Activated CD8-positive, alpha-beta memory T cell treated with anti-CD3 and anti-CD28 coated beads, Interleukin-2, amount 10 ng/mL, durations not matched to agents 7 days and 5 days (primary cell): ENCODE measurements at regions of chr9 and their contacts with region 1.

Region 1: DNA sequence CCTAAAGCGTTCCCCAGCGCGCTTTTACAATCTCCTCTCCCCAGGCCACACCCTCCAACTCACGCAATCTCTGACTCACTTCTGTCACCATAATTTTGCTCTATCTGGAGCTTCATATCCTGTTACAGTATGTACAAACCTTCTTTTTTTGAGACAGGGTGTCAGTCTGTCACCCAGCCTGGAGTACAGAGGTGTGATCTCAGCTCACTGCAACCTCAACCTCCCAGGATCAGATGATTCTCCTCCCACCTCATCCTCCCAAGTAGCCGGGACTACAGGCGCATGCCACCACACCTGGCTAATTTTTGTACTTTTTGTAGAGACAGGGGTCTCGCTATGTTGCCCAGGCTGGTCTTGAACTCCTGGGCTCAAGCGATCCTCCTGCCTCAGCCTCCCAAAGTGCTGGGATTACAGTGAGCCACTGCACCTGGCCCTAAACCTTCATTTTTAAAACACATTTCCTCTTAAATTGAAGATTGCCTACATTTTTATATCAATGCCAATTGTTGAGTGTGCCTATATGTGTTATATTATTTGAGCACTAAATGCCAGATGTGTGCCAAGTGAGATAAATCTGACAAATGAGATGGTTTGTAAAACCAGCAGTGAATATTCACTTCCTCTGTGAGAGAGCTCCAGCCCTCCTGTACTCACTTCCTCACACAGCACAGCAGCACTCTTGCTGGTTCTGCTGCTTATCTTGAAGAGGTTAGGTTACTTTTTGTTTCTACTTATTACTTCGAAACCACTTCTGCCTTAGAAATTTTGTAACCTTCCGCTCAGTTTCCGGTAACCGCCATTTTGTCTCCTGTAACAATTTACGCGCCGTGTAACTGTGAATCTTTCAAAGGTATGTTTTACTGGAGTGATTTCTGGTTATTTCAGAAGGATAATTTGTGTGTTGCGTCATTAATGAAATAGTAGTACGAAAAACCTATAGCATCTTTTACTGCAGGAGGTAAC is 57.9 kb downstream of the DOCK8 start:
- DNase-seq: peak; percentile 90
- ATAC-seq: peak; percentile 80
- H3K4me3 Mint-ChIP-seq: peak overlapping the region; percentile 97
- H3K27ac Mint-ChIP-seq: peak overlapping the region; percentile 100
- H3K4me1 Mint-ChIP-seq: peaks cover 67% of the 10 kb centered on the region
- H3K27me3 Mint-ChIP-seq: no peaks in the 10 kb centered on the region

Region 2: GRCh38 chr9:224582-225520 is 47.7 kb before region 1 on chr9:
- CTCF ChIA-PET with region 1: interaction called, 57 read pairs
- DNase-seq: peak; percentile 74
- ATAC-seq: peak; percentile 58
- H3K4me3 Mint-ChIP-seq: no peak overlapping the region
- H3K27ac Mint-ChIP-seq: no peak overlapping the region
- H3K4me1 Mint-ChIP-seq: peaks cover 48% of the 10 kb centered on the region
- H3K27me3 Mint-ChIP-seq: no peaks in the 10 kb centered on the region

Region 3: GRCh38 chr9:237858-238345 is 34.6 kb before region 1 on chr9:
- CTCF ChIA-PET with region 1: interaction called, 11 read pairs
- DNase-seq: no peak
- ATAC-seq: peak; percentile 51
- H3K4me3 Mint-ChIP-seq: peak overlapping the region; percentile 51
- H3K27ac Mint-ChIP-seq: peak overlapping the region; percentile 85
- H3K4me1 Mint-ChIP-seq: peaks cover 68% of the 10 kb centered on the region
- H3K27me3 Mint-ChIP-seq: no peaks in the 10 kb centered on the region

Region 4: GRCh38 chr9:911003-911402 is 638.5 kb after region 1 on chr9:
- CTCF ChIA-PET with region 1: no interaction called
- DNase-seq: no peak
- ATAC-seq: no peak
- H3K4me3 Mint-ChIP-seq: no peak overlapping the region
- H3K27ac Mint-ChIP-seq: no peak overlapping the region
- H3K4me1 Mint-ChIP-seq: no peaks in the 10 kb centered on the region
- H3K27me3 Mint-ChIP-seq: peaks cover 47% of the 10 kb centered on the region